ENCODE measurements at regions of chr16 and their contacts with region 1.

Region 1: DNA sequence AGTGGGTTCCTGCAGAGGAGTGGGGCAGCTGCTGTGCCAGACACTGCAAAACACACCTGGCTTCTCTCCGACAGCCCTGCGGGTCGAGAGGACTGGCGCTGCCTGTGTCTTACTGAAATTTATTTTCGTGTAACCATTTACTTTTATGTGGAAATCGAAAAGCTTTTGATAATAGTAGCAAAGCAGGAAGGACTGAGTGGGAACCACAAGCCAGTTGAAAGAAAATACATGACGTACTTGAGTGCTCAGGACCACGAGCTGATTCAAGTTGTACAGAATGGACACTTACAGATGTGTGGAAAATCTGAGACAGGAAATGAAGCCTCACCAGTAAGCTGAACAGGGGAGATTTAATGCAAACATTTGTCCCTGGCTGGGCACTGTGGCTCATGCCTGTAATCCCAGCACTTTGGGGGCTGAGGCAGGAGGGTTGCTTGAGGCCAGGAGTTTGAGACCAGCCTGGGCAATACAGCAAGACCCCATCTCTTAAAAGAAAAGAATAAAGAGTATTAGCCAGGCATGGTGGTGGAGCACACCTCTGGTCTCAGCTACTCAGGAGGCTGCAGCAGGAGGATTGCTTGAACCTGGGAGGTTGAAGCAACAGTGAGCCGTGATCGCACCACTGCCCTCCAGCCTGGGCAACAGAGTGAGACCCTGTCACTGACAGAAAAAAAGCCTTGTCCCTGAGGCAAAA is 11.3 kb upstream of the RPL13 start:
- DNase-seq: no peak
- H3K4me3 ChIP-seq: no peak overlapping the region
- H3K27ac ChIP-seq: no peak overlapping the region
- H3K4me1 ChIP-seq: no peaks in the 10 kb centered on the region
- H3K27me3 ChIP-seq: no peaks in the 10 kb centered on the region
- CTCF ChIP-seq: no peak
- EP300 ChIP-seq: no peak
- POLR2A ChIP-seq: no peak
- RAD21 ChIP-seq: no peak

Region 2: GRCh38 chr16:89453501-89454321 is 95.4 kb before region 1 on chr16:
- CTCF ChIA-PET with region 1: no interaction called
- POLR2A ChIA-PET with region 1: no interaction called
- DNase-seq: no peak
- H3K4me3 ChIP-seq: no peak overlapping the region
- H3K27ac ChIP-seq: no peak overlapping the region
- H3K4me1 ChIP-seq: peaks cover 0 to 4% (median 3%) of the 10 kb centered on the region in 4 experiments; a peak in 4 of 7 replicates
- H3K27me3 ChIP-seq: no peaks in the 10 kb centered on the region
- CTCF ChIP-seq: peak in 2 of 3 experiments; percentile 54 to 60; a peak in 2 of 4 replicates
- EP300 ChIP-seq: no peak
- POLR2A ChIP-seq: no peak
- RAD21 ChIP-seq: peak in 1 of 2 experiments; percentile 45; a peak in 3 of 4 replicates

Region 3: DNA sequence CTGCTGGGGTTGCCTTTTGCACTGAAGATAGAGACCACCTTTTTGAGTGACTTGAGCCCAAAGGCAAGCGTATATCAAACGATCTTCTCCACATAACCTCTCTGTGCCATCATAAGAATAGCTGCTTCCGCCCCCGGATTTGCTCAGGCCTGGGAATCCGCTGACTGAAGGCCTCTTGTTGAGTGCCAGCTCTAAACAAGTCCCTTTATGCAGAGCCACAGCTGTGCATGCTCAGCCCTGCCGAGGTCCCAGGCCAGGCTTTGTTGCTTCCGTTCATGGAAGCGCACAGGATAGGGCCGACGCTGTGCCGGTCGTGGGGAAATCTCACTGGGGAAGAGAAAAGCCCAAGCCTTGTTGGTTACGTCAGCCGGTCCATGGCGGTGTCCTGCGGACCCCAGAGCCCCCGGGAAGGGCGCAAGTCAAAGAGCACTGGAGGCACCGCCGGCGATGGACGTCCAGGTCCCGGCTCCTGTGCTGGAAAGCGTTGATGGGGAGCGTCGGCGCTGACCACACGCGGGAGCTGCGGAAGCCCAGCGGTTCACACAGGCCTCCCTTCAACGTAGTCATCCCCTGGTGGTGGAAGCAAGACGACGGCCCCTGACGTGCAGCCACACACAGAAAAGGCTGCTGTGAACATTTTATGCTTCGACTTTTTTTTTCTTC is 12.1 kb before region 1 on chr16:
- CTCF ChIA-PET with region 1: interaction called, 7 read pairs
- POLR2A ChIA-PET with region 1: interaction called, 47 read pairs
- DNase-seq: no peak
- H3K4me3 ChIP-seq: no peak overlapping the region
- H3K27ac ChIP-seq: no peak overlapping the region
- H3K4me1 ChIP-seq: no peaks in the 10 kb centered on the region
- H3K27me3 ChIP-seq: no peaks in the 10 kb centered on the region
- CTCF ChIP-seq: no peak
- EP300 ChIP-seq: no peak
- POLR2A ChIP-seq: no peak
- RAD21 ChIP-seq: no peak

Region 4: GRCh38 chr16:89560378-89561141 is 11.4 kb after region 1 on chr16 and contains the start of gene RPL13:
- CTCF ChIA-PET with region 1: interaction called, 15 read pairs
- POLR2A ChIA-PET with region 1: interaction called, 63 read pairs
- DNase-seq: peak; percentile 81 to 92
- H3K4me3 ChIP-seq: peak within 1 kb of the TSS; percentile 69 to 97 (median 82)
- H3K27ac ChIP-seq: peak within 1 kb of the TSS; percentile 79
- H3K4me1 ChIP-seq: peaks cover 5 to 28% (median 8%) of the 10 kb centered on the region in 4 experiments
- H3K27me3 ChIP-seq: no peaks in the 10 kb centered on the region
- CTCF ChIP-seq: no peak
- EP300 ChIP-seq: no peak
- POLR2A ChIP-seq: peak; percentile 99
- RAD21 ChIP-seq: no peak
- total RNA-seq, gene RPL13: 2,162 and 2,205 TPM in 2 replicates